WTC11 (cell line): ENCODE measurements at regions of chr5 and their contacts with region 1.

Region 1: GRCh38 chr5:138096363-138096762 is 12.5 kb downstream of the WNT8A start:
- DNase-seq: no peak
- ATAC-seq: no peak
- H3K4me3 Mint-ChIP-seq: peak overlapping the region; percentile 12; the same call in 1 of the 2 replicates
- H3K27ac Mint-ChIP-seq: no peak overlapping the region
- H3K4me1 Mint-ChIP-seq: peaks cover 68% of the 10 kb centered on the region
- H3K27me3 Mint-ChIP-seq: peaks cover 100% of the 10 kb centered on the region
- CTCF ChIP-seq: no peak

Region 2: DNA sequence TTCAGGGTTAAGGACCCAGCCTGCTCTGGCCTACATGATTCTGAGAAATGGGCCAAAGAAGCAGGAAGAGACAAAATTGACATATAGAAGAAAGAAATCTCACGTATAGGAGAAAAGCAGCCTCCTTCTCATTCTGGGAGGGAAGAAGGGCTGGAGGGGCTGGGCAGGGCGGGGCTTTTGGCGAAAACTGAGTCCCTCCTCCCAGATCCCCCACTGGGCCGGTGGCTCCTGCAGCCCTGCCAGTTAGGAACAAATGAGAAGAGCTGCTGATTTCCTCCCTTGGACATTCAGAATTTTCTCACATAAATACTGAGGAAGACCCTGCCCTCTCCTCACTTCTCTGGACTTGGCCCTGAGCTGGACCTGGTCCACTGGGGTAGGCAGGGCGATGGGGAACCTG is 12.7 kb before region 1 on chr5 and contains the start of gene WNT8A:
- CTCF ChIA-PET with region 1: interaction called, 26 read pairs
- POLR2A ChIA-PET with region 1: no interaction called
- DNase-seq: peak; percentile 30
- ATAC-seq: peak; percentile 61
- H3K4me3 Mint-ChIP-seq: no peak within 1 kb of the TSS
- H3K27ac Mint-ChIP-seq: no peak within 1 kb of the TSS
- H3K4me1 Mint-ChIP-seq: peaks cover 15% of the 10 kb centered on the region
- H3K27me3 Mint-ChIP-seq: peaks cover 75% of the 10 kb centered on the region
- CTCF ChIP-seq: no peak
- total RNA-seq, gene WNT8A: 0.16 TPM in 1 of 3 replicates, not detected in the others